ENCODE measurements at regions of chr12 and their contacts with region 1.

Region 1: DNA sequence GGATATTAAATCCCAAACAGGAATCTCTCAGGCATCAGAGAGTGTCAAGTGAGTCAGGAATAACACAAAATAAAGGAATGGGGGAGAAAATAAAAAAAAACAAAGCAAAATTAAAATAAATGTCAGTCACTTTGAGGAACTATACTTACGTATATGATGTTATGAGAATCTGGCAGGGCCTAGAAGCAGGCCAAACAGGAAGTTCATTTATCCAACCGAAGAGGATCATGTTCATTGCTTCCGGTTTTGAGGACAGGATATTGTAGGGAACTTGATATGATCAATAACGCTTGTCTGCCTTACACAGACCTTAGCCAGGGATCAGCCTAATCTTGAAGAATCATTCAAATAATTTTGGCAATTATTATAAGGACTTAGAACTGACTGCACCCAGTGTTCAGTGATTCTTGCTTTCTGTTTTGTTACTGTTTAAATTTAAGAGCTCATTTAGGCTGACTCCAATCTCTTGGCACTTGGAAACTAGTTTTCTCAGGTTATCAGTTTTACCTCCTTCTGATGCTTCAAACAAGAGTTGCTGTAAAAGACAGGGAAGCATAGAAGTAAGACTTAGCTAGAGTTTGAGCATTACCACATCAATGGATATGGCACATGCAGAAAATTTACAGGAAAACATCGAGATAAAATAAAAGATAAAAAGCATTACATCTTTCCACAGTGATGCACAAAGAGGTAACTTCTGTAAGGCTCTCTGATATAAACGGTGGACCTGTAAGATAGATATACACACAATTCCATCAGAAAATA is 53.4 kb downstream of the ZFC3H1 start:
- DNase-seq: peak in 2 of 9 experiments; percentile 3 to 35
- ATAC-seq: peak; percentile 51
- H3K4me3 ChIP-seq: no peak overlapping the region
- H3K4me3 Mint-ChIP-seq: peak overlapping the region; percentile 40
- H3K27ac ChIP-seq: peak overlapping the region; percentile 32 to 42
- H3K27ac Mint-ChIP-seq: peak overlapping the region; percentile 88
- H3K4me1 ChIP-seq: peaks cover 12% of the 10 kb centered on the region
- H3K4me1 Mint-ChIP-seq: peaks cover 20% of the 10 kb centered on the region
- H3K27me3 ChIP-seq: no peaks in the 10 kb centered on the region
- H3K27me3 Mint-ChIP-seq: no peaks in the 10 kb centered on the region
- CTCF ChIP-seq: no peak

Region 2: GRCh38 chr12:71626098-71626497 is 15.9 kb after region 1 on chr12:
- CTCF ChIA-PET with region 1: no interaction called
- POLR2A ChIA-PET with region 1: no interaction called
- intact Hi-C with region 1: loop called in 1 of 2 experiments (anchors 2 kb)
- DNase-seq: no peak
- ATAC-seq: no peak
- H3K4me3 ChIP-seq: no peak overlapping the region
- H3K4me3 Mint-ChIP-seq: peak overlapping the region; percentile 12
- H3K27ac ChIP-seq: no peak overlapping the region
- H3K27ac Mint-ChIP-seq: peak overlapping the region; percentile 8
- H3K4me1 ChIP-seq: no peaks in the 10 kb centered on the region
- H3K4me1 Mint-ChIP-seq: peaks cover 26% of the 10 kb centered on the region
- H3K27me3 ChIP-seq: no peaks in the 10 kb centered on the region
- H3K27me3 Mint-ChIP-seq: no peaks in the 10 kb centered on the region
- CTCF ChIP-seq: no peak

Region 3: GRCh38 chr12:71652656-71653055 is 42.4 kb after region 1 on chr12:
- CTCF ChIA-PET with region 1: no interaction called
- POLR2A ChIA-PET with region 1: no interaction called
- intact Hi-C with region 1: loop called in 1 of 2 experiments (anchors 5 kb)
- DNase-seq: no peak
- ATAC-seq: no peak
- H3K4me3 ChIP-seq: no peak overlapping the region
- H3K4me3 Mint-ChIP-seq: no peak overlapping the region
- H3K27ac ChIP-seq: no peak overlapping the region
- H3K27ac Mint-ChIP-seq: no peak overlapping the region
- H3K4me1 ChIP-seq: peaks cover 37% of the 10 kb centered on the region
- H3K4me1 Mint-ChIP-seq: peaks cover 51% of the 10 kb centered on the region
- H3K27me3 ChIP-seq: no peaks in the 10 kb centered on the region
- H3K27me3 Mint-ChIP-seq: no peaks in the 10 kb centered on the region
- CTCF ChIP-seq: no peak

Region 4: GRCh38 chr12:71900091-71900490 is 289.9 kb after region 1 on chr12:
- CTCF ChIA-PET with region 1: no interaction called
- POLR2A ChIA-PET with region 1: no interaction called
- intact Hi-C with region 1: loop called in 1 of 2 experiments (anchors 5 kb)
- DNase-seq: no peak
- ATAC-seq: no peak
- H3K4me3 ChIP-seq: no peak overlapping the region
- H3K4me3 Mint-ChIP-seq: no peak overlapping the region
- H3K27ac ChIP-seq: no peak overlapping the region
- H3K27ac Mint-ChIP-seq: no peak overlapping the region
- H3K4me1 ChIP-seq: no peaks in the 10 kb centered on the region
- H3K4me1 Mint-ChIP-seq: no peaks in the 10 kb centered on the region
- H3K27me3 ChIP-seq: no peaks in the 10 kb centered on the region
- H3K27me3 Mint-ChIP-seq: no peaks in the 10 kb centered on the region
- CTCF ChIP-seq: no peak